Activated T-helper 2 cell treated with anti-CD3 and anti-CD28 coated beads, Interferon-gamma antibody, Interleukin-2, Interleukin-4, amounts not matched to agents 10 μg/mL and 5 μg/mL and 100 μg/mL, durations not matched to agents 14 hours and 24 hours and 36 hours (primary cell): ENCODE measurements at regions of chr14 and their contacts with region 1.

Region 1: GRCh38 chr14:73568381-73568781 is 632 bp upstream of the ACOT2 start:
- DNase-seq: no peak
- H3K4me3 Mint-ChIP-seq: peak overlapping the region; percentile 90
- H3K27ac Mint-ChIP-seq: peak overlapping the region; percentile 96
- H3K4me1 Mint-ChIP-seq: peaks cover 38% of the 10 kb centered on the region
- H3K27me3 Mint-ChIP-seq: no peaks in the 10 kb centered on the region

Region 2: DNA sequence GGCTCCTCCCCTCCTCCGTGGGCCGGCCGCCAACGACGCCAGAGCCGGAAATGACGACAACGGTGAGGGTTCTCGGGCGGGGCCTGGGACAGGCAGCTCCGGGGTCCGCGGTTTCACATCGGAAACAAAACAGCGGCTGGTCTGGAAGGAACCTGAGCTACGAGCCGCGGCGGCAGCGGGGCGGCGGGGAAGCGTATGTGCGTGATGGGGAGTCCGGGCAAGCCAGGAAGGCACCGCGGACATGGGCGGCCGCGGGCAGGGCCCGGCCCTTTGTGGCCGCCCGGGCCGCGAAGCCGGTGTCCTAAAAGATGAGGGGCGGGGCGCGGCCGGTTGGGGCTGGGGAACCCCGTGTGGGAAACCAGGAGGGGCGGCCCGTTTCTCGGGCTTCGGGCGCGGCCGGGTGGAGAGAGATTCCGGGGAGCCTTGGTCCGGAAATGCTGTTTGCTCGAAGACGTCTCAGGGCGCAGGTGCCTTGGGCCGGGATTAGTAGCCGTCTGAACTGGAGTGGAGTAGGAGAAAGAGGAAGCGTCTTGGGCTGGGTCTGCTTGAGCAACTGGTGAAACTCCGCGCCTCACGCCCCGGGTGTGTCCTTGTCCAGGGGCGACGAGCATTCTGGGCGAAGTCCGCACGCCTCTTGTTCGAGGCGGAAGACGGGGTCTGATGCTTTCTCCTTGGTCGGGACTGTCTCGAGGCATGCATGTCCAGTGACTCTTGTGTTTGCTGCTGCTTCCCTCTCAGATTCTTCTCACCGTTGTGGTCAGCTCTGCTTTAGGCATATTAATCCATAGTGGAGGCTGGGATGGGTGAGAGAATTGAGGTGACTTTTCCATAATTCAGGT is 431.8 kb before region 1 on chr14 and contains the start of gene PSEN1:
- intact Hi-C with region 1: loop called (anchors 2 kb)
- DNase-seq: peak; percentile 97
- H3K4me3 Mint-ChIP-seq: peak within 1 kb of the TSS; percentile 87
- H3K27ac Mint-ChIP-seq: peak within 1 kb of the TSS; percentile 98
- H3K4me1 Mint-ChIP-seq: peaks cover 16% of the 10 kb centered on the region
- H3K27me3 Mint-ChIP-seq: no peaks in the 10 kb centered on the region
- total RNA-seq, gene PSEN1: 34.7 and 36.5 TPM in 2 replicates

Region 3: DNA sequence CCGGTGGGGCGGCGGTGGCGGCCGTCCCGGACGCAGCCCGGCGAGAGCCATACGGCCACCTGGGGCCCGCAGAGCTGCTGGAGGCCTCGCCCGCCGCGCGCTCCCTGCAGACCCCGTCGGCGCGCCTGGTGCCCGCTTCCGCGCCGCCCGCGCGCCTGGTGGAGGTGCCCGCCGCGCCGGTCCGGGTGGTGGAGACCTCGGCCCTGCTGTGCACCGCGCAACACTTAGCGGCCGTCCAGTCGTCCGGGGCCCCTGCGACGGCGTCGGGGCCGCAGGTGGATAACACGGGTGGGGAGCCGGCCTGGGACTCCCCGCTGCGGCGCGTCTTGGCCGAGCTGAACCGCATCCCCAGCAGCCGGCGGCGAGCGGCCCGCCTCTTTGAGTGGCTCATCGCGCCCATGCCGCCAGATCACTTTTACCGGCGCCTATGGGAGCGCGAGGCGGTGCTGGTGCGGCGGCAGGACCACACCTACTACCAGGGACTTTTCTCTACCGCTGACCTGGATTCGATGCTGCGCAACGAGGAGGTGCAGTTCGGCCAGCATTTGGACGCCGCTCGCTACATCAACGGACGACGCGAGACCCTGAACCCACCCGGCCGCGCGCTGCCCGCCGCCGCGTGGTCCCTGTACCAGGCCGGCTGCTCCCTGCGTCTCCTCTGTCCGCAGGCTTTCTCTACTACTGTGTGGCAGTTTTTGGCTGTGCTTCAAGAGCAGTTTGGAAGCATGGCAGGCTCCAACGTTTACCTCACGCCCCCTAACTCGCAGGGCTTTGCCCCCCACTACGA is 76.9 kb before region 1 on chr14:
- intact Hi-C with region 1: loop called (anchors 5 kb)
- DNase-seq: peak; percentile 71
- H3K4me3 Mint-ChIP-seq: peak overlapping the region; percentile 84
- H3K27ac Mint-ChIP-seq: peak overlapping the region; percentile 76
- H3K4me1 Mint-ChIP-seq: peaks cover 29% of the 10 kb centered on the region
- H3K27me3 Mint-ChIP-seq: peaks cover 5% of the 10 kb centered on the region

Region 4: DNA sequence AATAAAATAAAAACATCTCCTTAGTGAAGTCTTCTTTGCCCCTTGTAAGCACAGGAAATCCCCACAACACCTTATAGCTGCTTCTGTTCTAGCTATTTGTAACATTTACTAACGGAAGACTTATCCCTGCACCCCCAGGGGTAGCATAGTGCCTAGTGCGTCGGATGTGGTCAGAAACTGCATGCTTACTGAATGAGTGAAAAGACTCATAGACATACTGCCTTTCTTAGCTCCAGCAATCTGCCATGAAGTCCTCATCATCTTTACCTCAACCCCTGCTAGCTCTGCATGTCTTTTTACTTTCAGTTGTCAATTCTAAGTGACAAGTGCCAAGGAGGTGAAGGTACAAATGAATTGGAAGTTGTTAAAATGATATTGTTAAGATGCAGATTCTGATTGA is 64.7 kb before region 1 on chr14:
- intact Hi-C with region 1: loop called (anchors 5 kb)
- DNase-seq: no peak
- H3K4me3 Mint-ChIP-seq: no peak overlapping the region
- H3K27ac Mint-ChIP-seq: no peak overlapping the region
- H3K4me1 Mint-ChIP-seq: no peaks in the 10 kb centered on the region
- H3K27me3 Mint-ChIP-seq: no peaks in the 10 kb centered on the region

Region 5: GRCh38 chr14:73613046-73613383 is 44.6 kb after region 1 on chr14:
- intact Hi-C with region 1: loop called (anchors 10 kb)
- DNase-seq: no peak
- H3K4me3 Mint-ChIP-seq: peak overlapping the region; percentile 79
- H3K27ac Mint-ChIP-seq: no peak overlapping the region
- H3K4me1 Mint-ChIP-seq: peaks cover 3% of the 10 kb centered on the region
- H3K27me3 Mint-ChIP-seq: peaks cover 10% of the 10 kb centered on the region